CD4-positive, alpha-beta T cell (primary cell): ENCODE measurements at regions of chrX and their contacts with region 1.

Region 1: GRCh38 chrX:78945186-78945912 is at the start of gene P2RY10:
- DNase-seq: peak in 12 of 14 experiments; percentile 7 to 85 (median 29)
- ATAC-seq: peak; percentile 87
- H3K4me3 ChIP-seq: peak within 1 kb of the TSS; percentile 77
- H3K4me3 Mint-ChIP-seq: peak within 1 kb of the TSS; percentile 93
- H3K27ac ChIP-seq: peak within 1 kb of the TSS; percentile 68 to 83
- H3K27ac Mint-ChIP-seq: peak within 1 kb of the TSS; percentile 96
- H3K4me1 ChIP-seq: peaks cover 7% of the 10 kb centered on the region
- H3K4me1 Mint-ChIP-seq: peaks cover 73% of the 10 kb centered on the region
- H3K27me3 ChIP-seq: no peaks in the 10 kb centered on the region
- H3K27me3 Mint-ChIP-seq: no peaks in the 10 kb centered on the region
- CTCF ChIP-seq: no peak
- total RNA-seq, gene P2RY10: 85.3 to 98.5 TPM

Region 2: GRCh38 chrX:78800694-78801093 is 144.7 kb before region 1 on chrX:
- CTCF ChIA-PET with region 1: no interaction called
- POLR2A ChIA-PET with region 1: no interaction called
- intact Hi-C with region 1: no loop called
- DNase-seq: no peak
- ATAC-seq: no peak
- H3K4me3 ChIP-seq: no peak overlapping the region
- H3K4me3 Mint-ChIP-seq: no peak overlapping the region
- H3K27ac ChIP-seq: no peak overlapping the region
- H3K27ac Mint-ChIP-seq: no peak overlapping the region
- H3K4me1 ChIP-seq: no peaks in the 10 kb centered on the region
- H3K4me1 Mint-ChIP-seq: peaks cover 14% of the 10 kb centered on the region
- H3K27me3 ChIP-seq: no peaks in the 10 kb centered on the region
- H3K27me3 Mint-ChIP-seq: no peaks in the 10 kb centered on the region
- CTCF ChIP-seq: no peak

Region 3: GRCh38 chrX:78957768-78958130 is 12.4 kb after region 1 on chrX:
- CTCF ChIA-PET with region 1: interaction called, 6 read pairs
- POLR2A ChIA-PET with region 1: interaction called, 22 read pairs
- intact Hi-C with region 1: no loop called
- DNase-seq: no peak
- ATAC-seq: no peak
- H3K4me3 ChIP-seq: no peak overlapping the region
- H3K4me3 Mint-ChIP-seq: peak overlapping the region; percentile 45
- H3K27ac ChIP-seq: peak overlapping the region; percentile 13 to 28
- H3K27ac Mint-ChIP-seq: peak overlapping the region; percentile 63
- H3K4me1 ChIP-seq: peaks cover 28% of the 10 kb centered on the region
- H3K4me1 Mint-ChIP-seq: peaks cover 79% of the 10 kb centered on the region
- H3K27me3 ChIP-seq: no peaks in the 10 kb centered on the region
- H3K27me3 Mint-ChIP-seq: no peaks in the 10 kb centered on the region
- CTCF ChIP-seq: no peak

Region 4: DNA sequence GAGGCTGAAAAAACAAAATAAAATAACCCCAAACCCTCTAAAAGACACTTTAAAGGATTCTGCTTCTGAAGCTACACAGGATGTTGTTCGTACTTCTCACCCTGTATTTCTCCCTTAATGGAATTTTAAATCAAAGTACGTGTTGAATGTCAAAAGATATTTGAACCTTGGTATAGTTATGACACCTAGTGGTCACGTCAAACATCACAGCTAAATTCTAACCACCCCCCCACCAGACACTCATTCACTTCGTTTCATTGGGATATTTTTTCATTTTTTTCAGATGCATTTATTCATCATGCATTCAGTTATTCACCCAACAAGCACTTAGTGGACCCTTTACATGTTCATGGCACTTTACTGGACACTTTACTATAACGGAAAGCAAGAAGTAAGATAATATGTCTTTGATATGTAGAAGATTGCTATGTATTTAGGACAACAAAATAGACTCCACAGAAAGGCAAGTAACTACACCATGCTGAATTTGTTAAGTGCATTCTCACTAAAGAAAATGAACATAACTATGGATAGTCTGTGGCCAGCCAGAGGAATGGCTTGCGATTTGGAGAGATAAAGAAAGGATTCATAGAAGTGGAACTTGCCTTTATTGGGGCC is 136.7 kb after region 1 on chrX:
- CTCF ChIA-PET with region 1: no interaction called
- POLR2A ChIA-PET with region 1: interaction called, 10 read pairs
- intact Hi-C with region 1: loop called in 1 of 2 experiments (anchors 2 kb)
- DNase-seq: peak in 7 of 14 experiments; percentile 8 to 79 (median 51)
- ATAC-seq: peak; percentile 88
- H3K4me3 ChIP-seq: no peak overlapping the region
- H3K4me3 Mint-ChIP-seq: peak overlapping the region; percentile 82
- H3K27ac ChIP-seq: no peak overlapping the region
- H3K27ac Mint-ChIP-seq: peak overlapping the region; percentile 82
- H3K4me1 ChIP-seq: peaks cover 2% of the 10 kb centered on the region
- H3K4me1 Mint-ChIP-seq: peaks cover 33% of the 10 kb centered on the region
- H3K27me3 ChIP-seq: no peaks in the 10 kb centered on the region
- H3K27me3 Mint-ChIP-seq: no peaks in the 10 kb centered on the region
- CTCF ChIP-seq: peak; percentile 43

Region 5: GRCh38 chrX:79167462-79167861 is 222.1 kb after region 1 on chrX:
- CTCF ChIA-PET with region 1: no interaction called
- POLR2A ChIA-PET with region 1: no interaction called
- intact Hi-C with region 1: loop called in 1 of 2 experiments (anchors 5 kb)
- DNase-seq: peak in 1 of 14 experiments; percentile 54
- ATAC-seq: peak; percentile 41
- H3K4me3 ChIP-seq: peak overlapping the region; percentile 5
- H3K4me3 Mint-ChIP-seq: peak overlapping the region; percentile 76
- H3K27ac ChIP-seq: peak overlapping the region; percentile 69 to 70
- H3K27ac Mint-ChIP-seq: peak overlapping the region; percentile 97
- H3K4me1 ChIP-seq: peaks cover 46% of the 10 kb centered on the region
- H3K4me1 Mint-ChIP-seq: peaks cover 94% of the 10 kb centered on the region
- H3K27me3 ChIP-seq: no peaks in the 10 kb centered on the region
- H3K27me3 Mint-ChIP-seq: no peaks in the 10 kb centered on the region
- CTCF ChIP-seq: no peak

Region 6: DNA sequence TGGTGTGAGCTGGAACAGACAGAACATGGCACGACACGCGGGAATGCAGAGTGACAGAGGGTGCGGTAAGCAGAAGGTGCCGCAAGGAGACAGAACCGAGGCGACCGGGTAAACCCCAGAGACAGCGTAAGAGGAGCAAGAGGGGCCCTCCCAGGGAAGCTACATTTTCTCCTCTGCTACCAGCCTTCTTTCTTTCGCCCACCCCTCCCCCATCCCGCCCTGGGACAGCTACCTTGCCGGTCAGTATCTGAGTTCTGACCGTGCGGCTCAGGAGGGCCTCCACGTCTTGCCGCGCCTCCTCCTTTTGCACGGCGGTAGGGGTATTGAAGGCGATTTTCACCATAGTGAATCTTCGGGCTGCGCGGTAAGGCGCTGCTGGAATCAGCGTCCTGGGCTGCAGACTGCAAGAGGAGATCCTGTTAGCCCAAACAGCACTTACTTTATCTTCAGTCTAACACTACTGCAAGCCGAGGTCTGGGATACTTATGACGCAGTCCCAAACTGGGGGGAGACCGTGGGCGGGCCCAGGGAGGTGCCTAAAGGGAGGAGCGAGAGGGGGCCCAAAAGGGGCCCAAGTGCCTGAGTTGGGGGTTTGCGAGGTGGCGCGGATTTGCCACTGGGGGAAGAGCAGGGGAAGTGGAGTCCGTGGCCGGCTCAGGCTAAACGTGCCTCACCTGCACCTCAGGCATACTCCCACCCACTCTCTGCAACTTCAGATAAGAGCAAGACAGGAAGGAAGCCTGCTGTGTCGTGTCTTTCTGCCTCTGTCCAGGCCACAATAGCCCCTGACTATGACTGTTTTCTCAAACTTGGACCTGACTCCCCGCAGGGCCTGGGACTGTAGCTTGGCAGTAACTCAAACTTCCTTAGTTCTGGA is 421.8 kb after region 1 on chrX and contains the start of gene ITM2A:
- CTCF ChIA-PET with region 1: no interaction called
- POLR2A ChIA-PET with region 1: interaction called, 4 read pairs
- intact Hi-C with region 1: loop called in 1 of 2 experiments (anchors 10 kb)
- DNase-seq: peak; percentile 36 to 85 (median 55)
- ATAC-seq: peak; percentile 86
- H3K4me3 ChIP-seq: peak within 1 kb of the TSS; percentile 86
- H3K4me3 Mint-ChIP-seq: peak within 1 kb of the TSS; percentile 98
- H3K27ac ChIP-seq: peak within 1 kb of the TSS; percentile 77 to 88
- H3K27ac Mint-ChIP-seq: peak within 1 kb of the TSS; percentile 99
- H3K4me1 ChIP-seq: peaks cover 13% of the 10 kb centered on the region
- H3K4me1 Mint-ChIP-seq: peaks cover 27% of the 10 kb centered on the region
- H3K27me3 ChIP-seq: no peaks in the 10 kb centered on the region
- H3K27me3 Mint-ChIP-seq: no peaks in the 10 kb centered on the region
- CTCF ChIP-seq: no peak
- total RNA-seq, gene ITM2A: 236 to 259 TPM